ENCODE measurements at regions of chr22 and their contacts with region 1.

Region 1: GRCh38 chr22:24995649-24996180 is 43.2 kb downstream of the KIAA1671 start:
- DNase-seq: no peak
- H3K4me3 ChIP-seq: no peak overlapping the region
- H3K27ac ChIP-seq: no peak overlapping the region
- H3K4me1 ChIP-seq: peaks cover 0 to 6% of the 10 kb centered on the region in 2 donors
- H3K27me3 ChIP-seq: no peaks in the 10 kb centered on the region
- CTCF ChIP-seq: no peak
- POLR2A ChIP-seq: no peak

Region 2: DNA sequence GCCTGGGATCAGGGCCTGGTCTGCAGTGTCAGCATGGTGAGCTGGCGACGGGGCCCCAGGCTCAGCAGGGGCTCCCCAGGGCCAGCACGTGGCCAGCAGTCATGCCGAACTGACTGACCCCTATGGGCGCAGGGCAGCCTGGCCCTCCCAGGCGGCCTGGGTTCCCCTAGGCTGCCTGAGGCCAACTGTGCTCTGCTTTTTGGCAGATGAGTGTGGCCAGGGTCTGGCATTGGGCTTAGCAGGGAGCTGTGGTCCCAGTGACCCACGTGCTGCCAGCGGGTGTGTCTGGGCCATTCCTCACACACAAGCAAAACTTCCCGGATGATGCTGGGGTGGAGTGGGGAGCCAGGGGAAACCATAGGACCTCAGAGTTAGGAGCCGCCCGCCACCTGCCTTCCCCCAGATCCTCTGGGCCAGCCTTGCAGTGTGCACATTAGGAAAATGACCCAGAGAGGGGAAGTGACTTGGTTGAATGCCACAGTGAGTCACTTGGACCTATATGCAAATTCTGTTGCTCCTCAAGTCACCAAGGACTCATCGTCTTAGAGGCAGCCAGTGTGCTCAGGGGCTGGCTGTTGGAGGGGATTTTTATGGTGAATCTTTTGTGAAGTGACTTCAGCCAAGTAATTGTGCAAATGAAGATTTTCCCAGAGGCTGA is 561.8 kb before region 1 on chr22:
- intact Hi-C with region 1: no loop called
- DNase-seq: no peak
- H3K4me3 ChIP-seq: no peak overlapping the region
- H3K27ac ChIP-seq: peak overlapping the region in 1 of 2 donors; percentile 52
- H3K4me1 ChIP-seq: peaks cover 0 to 7% of the 10 kb centered on the region in 2 donors
- H3K27me3 ChIP-seq: no peaks in the 10 kb centered on the region
- CTCF ChIP-seq: no peak
- POLR2A ChIP-seq: no peak

Region 3: DNA sequence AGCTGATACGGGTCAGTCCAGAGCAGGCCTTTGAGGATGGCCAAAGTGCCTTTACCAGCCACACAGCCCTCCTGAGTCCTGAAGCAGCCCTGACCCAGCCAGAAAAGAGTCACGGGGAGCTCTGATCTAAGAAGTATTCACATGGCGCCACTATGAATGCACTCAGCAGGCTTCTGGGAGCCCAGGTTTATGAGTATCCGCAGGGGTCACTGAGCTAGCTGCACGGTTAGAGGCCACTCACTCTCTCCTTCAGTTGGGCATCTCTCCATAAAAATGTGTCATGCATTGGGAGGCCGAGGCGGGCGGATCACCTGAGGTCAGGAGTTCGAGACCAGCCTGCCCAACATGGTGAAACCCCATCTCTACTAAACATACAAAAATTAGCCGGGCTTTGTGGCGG is 32.9 kb before region 1 on chr22:
- intact Hi-C with region 1: loop called (anchors 1 kb)
- DNase-seq: no peak
- H3K4me3 ChIP-seq: no peak overlapping the region
- H3K27ac ChIP-seq: no peak overlapping the region
- H3K4me1 ChIP-seq: peaks cover 0 to 16% of the 10 kb centered on the region in 2 donors
- H3K27me3 ChIP-seq: no peaks in the 10 kb centered on the region
- CTCF ChIP-seq: no peak
- POLR2A ChIP-seq: no peak

Region 4: GRCh38 chr22:24968066-24968561 is 27.6 kb before region 1 on chr22:
- intact Hi-C with region 1: loop called (anchors 1 kb)
- DNase-seq: peak; percentile 73 to 82
- H3K4me3 ChIP-seq: no peak overlapping the region
- H3K27ac ChIP-seq: peak overlapping the region; percentile 70 to 73
- H3K4me1 ChIP-seq: peaks cover 0 to 30% of the 10 kb centered on the region in 2 donors
- H3K27me3 ChIP-seq: no peaks in the 10 kb centered on the region
- CTCF ChIP-seq: no peak
- POLR2A ChIP-seq: no peak